ENCODE measurements at regions of chr4 and their contacts with region 1.

Region 1: GRCh38 chr4:67545199-67546003 is at the start of gene CENPC:
- DNase-seq: peak; percentile 98
- H3K4me3 ChIP-seq: peak within 1 kb of the TSS; percentile 91
- H3K27ac ChIP-seq: peak within 1 kb of the TSS; percentile 87
- H3K4me1 ChIP-seq: peaks cover 58% of the 10 kb centered on the region
- CTCF ChIP-seq: no peak
- total RNA-seq, gene CENPC: 46.2 and 47.4 TPM in 2 replicates

Region 2: DNA sequence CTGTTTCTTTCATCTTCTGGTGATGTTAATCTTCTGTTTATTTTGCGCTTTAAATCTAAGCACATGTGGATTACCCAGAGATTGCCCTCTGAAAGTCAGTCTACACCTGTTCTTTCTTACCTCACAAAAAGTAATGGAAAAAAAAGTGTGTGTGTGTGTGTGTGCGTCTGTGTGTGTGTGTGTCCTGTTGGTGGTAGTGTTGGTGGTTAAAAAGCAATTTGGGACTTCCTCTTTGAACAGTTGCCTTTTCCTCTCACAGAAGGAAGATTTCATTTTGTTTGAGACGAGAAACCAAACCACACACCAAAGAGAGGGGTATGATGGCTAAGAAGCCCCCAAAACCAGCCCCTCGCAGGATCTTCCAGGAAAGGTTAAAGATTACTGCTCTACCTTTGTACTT is 13.1 kb after region 1 on chr4 and contains the start of gene STAP1:
- CTCF ChIA-PET with region 1: no interaction called
- POLR2A ChIA-PET with region 1: interaction called, 94 read pairs
- intact Hi-C with region 1: no loop called
- DNase-seq: peak; percentile 92
- H3K4me3 ChIP-seq: peak within 1 kb of the TSS; percentile 88
- H3K27ac ChIP-seq: peak within 1 kb of the TSS; percentile 83
- H3K4me1 ChIP-seq: peaks cover 56% of the 10 kb centered on the region
- CTCF ChIP-seq: peak; percentile 46; the same call in 1 of the 2 replicates
- total RNA-seq, gene STAP1: 88.4 and 91.1 TPM in 2 replicates

Region 3: GRCh38 chr4:67668315-67668714 is 122.9 kb after region 1 on chr4:
- CTCF ChIA-PET with region 1: no interaction called
- POLR2A ChIA-PET with region 1: no interaction called
- intact Hi-C with region 1: no loop called
- DNase-seq: no peak
- H3K4me3 ChIP-seq: no peak overlapping the region
- H3K27ac ChIP-seq: no peak overlapping the region
- H3K4me1 ChIP-seq: no peaks in the 10 kb centered on the region
- CTCF ChIP-seq: no peak

Region 4: DNA sequence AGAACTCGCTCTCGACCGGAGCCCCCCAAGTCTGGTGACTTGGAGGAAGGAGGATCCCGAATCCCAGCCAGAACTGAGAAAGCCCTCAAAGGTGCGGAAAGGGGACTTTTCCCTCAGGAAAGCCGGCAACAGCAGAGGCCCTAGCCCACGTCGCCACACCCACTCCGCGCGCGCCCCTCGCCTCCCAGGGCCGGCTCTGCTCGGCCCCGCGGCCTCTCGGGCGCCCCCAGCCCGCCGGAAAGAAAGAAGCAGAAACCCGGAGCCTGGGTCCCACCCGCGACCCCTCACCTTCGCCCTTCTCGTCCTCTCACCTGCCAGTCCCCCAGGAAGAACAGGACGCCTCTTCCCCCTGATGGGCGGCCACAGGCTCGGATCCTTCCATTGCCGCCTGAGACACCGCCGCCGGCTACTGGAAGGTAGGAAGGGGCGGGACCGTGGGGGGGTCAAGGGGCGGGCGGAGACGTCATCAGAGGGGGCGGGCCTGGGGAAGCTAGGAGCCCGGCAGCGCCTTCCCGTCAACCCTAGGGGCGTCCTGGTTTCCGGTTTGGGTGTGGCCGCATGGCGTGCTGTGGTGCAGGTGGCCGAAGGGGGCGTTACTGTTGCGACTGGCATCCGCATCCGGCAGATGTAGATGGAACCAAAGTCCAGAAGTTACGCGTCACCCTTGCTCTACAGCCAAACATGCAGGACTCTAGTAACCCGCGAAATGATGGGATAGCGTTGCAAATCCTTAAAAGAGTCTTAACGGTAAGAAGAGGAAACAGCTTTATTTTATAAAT is 155.5 kb after region 1 on chr4 and contains the start of gene UBA6:
- CTCF ChIA-PET with region 1: interaction called, 3 read pairs
- POLR2A ChIA-PET with region 1: interaction called, 11 read pairs
- intact Hi-C with region 1: loop called (anchors 1 kb)
- DNase-seq: peak; percentile 98
- H3K4me3 ChIP-seq: peak within 1 kb of the TSS; percentile 90
- H3K27ac ChIP-seq: peak within 1 kb of the TSS; percentile 65
- H3K4me1 ChIP-seq: peaks cover 34% of the 10 kb centered on the region
- CTCF ChIP-seq: peak; percentile 74
- total RNA-seq, gene UBA6: 40.6 and 49.3 TPM in 2 replicates

Region 5: DNA sequence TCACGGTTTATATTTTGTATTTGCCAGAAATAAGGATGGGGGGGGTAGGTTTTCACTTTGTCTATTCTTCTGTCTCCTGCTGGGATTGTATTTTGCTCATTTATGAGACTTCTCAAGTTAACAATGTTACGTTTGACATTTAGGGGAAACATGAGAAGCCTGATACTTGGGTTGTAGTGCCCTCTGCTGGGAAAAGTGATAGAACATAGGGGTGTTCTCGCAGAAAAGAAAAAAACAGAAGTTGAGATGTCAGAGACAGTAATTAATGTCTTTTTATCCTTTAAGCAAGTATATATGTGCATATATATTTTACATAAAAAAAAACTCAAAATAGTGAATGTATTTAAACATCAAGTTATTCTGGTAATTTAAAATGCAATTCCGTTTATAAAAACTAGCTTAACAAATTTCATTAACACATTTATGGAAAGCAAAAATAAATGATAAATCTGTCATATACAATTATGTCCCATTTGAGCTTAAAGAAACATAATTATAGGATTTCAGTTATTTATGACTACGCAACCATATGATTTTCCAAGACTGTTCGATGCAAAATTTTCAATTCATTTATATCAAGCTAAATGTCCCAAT is 630.3 kb after region 1 on chr4:
- CTCF ChIA-PET with region 1: no interaction called
- POLR2A ChIA-PET with region 1: interaction called, 3 read pairs
- intact Hi-C with region 1: loop called (anchors 2 kb)
- DNase-seq: peak; percentile 64
- H3K4me3 ChIP-seq: no peak overlapping the region
- H3K27ac ChIP-seq: no peak overlapping the region
- H3K4me1 ChIP-seq: no peaks in the 10 kb centered on the region
- CTCF ChIP-seq: peak; percentile 92

Measured in OCI-LY7 (cell line).